WTC11 (cell line): ENCODE measurements at regions of chr17 and their contacts with region 1.

Region 1: GRCh38 chr17:15944759-15945529 is at the start of gene ADORA2B:
- DNase-seq: peak; percentile 67
- ATAC-seq: peak; percentile 72
- H3K4me3 Mint-ChIP-seq: peak within 1 kb of the TSS; percentile 70
- H3K27ac Mint-ChIP-seq: no peak within 1 kb of the TSS
- H3K4me1 Mint-ChIP-seq: peaks cover 30% of the 10 kb centered on the region
- H3K27me3 Mint-ChIP-seq: peaks cover 52% of the 10 kb centered on the region
- CTCF ChIP-seq: no peak
- total RNA-seq, gene ADORA2B: 4.2 to 5.1 TPM (median 4.9 TPM) in 3 replicates

Region 2: GRCh38 chr17:15900871-15901270 is 44.1 kb before region 1 on chr17:
- CTCF ChIA-PET with region 1: no interaction called
- POLR2A ChIA-PET with region 1: no interaction called
- DNase-seq: no peak
- ATAC-seq: no peak
- H3K4me3 Mint-ChIP-seq: no peak overlapping the region
- H3K27ac Mint-ChIP-seq: no peak overlapping the region
- H3K4me1 Mint-ChIP-seq: no peaks in the 10 kb centered on the region
- H3K27me3 Mint-ChIP-seq: no peaks in the 10 kb centered on the region
- CTCF ChIP-seq: no peak

Region 3: GRCh38 chr17:15930426-15930825 is 14.5 kb before region 1 on chr17:
- CTCF ChIA-PET with region 1: interaction called, 11 read pairs
- POLR2A ChIA-PET with region 1: no interaction called
- DNase-seq: no peak
- ATAC-seq: no peak
- H3K4me3 Mint-ChIP-seq: no peak overlapping the region
- H3K27ac Mint-ChIP-seq: no peak overlapping the region
- H3K4me1 Mint-ChIP-seq: peaks cover 12% of the 10 kb centered on the region
- H3K27me3 Mint-ChIP-seq: no peaks in the 10 kb centered on the region
- CTCF ChIP-seq: no peak

Region 4: DNA sequence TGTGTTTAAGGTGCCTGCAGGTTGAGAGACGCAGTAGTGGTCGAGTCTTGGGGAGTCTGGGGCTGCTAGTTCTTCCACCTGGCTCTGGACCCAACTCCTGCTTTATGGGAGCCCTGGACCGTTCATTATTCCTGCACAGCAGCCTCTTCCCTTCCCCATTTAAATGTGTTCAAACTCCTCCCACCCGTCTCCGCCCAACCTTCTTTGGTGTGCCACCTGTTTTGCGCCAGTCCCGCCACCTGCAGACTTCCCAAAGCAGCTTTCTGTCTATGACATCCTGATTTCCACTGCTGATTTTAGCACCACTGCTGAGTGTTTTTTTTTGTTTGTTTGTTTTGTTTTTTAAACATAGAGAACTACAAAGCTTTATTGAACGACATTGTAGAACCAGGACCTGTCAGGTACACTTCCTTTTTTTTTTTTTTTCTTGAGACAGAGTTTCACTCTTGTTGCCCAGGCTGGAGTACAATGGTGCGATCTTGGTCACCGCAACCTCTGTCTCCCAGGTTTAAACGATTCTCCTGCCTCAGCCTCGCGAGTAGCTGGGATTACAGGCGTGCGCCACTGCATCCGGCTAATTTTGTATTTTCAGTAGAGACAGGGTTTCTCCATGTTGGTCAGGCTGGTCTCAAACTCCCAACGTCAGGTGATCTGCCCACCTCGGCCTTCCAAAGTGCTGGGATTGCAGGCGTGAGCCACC is 12.8 kb after region 1 on chr17:
- CTCF ChIA-PET with region 1: interaction called, 10 read pairs
- POLR2A ChIA-PET with region 1: interaction called, 3 read pairs
- DNase-seq: no peak
- ATAC-seq: no peak
- H3K4me3 Mint-ChIP-seq: no peak overlapping the region
- H3K27ac Mint-ChIP-seq: no peak overlapping the region
- H3K4me1 Mint-ChIP-seq: peaks cover 35% of the 10 kb centered on the region
- H3K27me3 Mint-ChIP-seq: no peaks in the 10 kb centered on the region; the same call in 1 of the 2 replicates
- CTCF ChIP-seq: no peak

Region 5: GRCh38 chr17:15966183-15966878 is 21.4 kb after region 1 on chr17:
- CTCF ChIA-PET with region 1: interaction called, 43 read pairs
- POLR2A ChIA-PET with region 1: interaction called, 16 read pairs
- DNase-seq: peak; percentile 82
- ATAC-seq: peak; percentile 90
- H3K4me3 Mint-ChIP-seq: peak overlapping the region; percentile 65
- H3K27ac Mint-ChIP-seq: peak overlapping the region; percentile 100
- H3K4me1 Mint-ChIP-seq: peaks cover 68% of the 10 kb centered on the region
- H3K27me3 Mint-ChIP-seq: no peaks in the 10 kb centered on the region
- CTCF ChIP-seq: no peak

Region 6: GRCh38 chr17:15999439-16000350 is 54.8 kb after region 1 on chr17 and contains the starts of genes TTC19 and ZSWIM7:
- CTCF ChIA-PET with region 1: interaction called, 47 read pairs
- POLR2A ChIA-PET with region 1: interaction called, 6 read pairs
- DNase-seq: peak; percentile 98
- ATAC-seq: peak; percentile 94
- H3K4me3 Mint-ChIP-seq: peak within 1 kb of the TSS; percentile 95
- H3K27ac Mint-ChIP-seq: peak within 1 kb of the TSS; percentile 97
- H3K4me1 Mint-ChIP-seq: peaks cover 17% of the 10 kb centered on the region
- H3K27me3 Mint-ChIP-seq: no peaks in the 10 kb centered on the region
- CTCF ChIP-seq: no peak
- total RNA-seq, gene TTC19: 55.3 to 60.0 TPM (median 58.0 TPM) in 3 replicates
- total RNA-seq, gene ZSWIM7: 41.1 to 41.7 TPM (median 41.3 TPM) in 3 replicates